Aorta (tissue), 5 donors: ENCODE measurements at regions of chr18 and their contacts with region 1.

Region 1: DNA sequence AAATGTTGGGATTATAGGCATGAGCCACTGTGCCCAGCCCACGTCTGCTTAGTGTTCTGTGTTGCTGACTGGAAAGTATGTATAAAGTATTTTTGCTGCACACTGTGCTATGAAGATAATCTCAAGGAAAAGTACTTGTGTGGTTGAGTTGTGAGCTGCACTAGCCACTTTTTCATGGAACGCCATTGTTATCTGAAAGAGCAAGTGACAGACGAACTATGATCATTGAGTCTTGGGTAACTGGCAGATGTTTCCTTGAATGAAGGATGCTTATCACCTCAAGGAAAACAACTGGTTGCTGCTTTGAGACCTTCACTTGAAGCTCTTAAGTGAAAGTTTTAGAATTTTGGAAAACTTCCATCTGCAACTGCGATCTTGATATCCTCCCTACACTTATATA is 82.2 kb upstream of the KCTD1 start:
- DNase-seq: no peak
- ATAC-seq: no peak
- H3K4me3 ChIP-seq: no peak overlapping the region
- H3K27ac ChIP-seq: no peak overlapping the region
- H3K4me1 ChIP-seq: no peaks in the 10 kb centered on the region
- H3K27me3 ChIP-seq: no peaks in the 10 kb centered on the region

Region 2: GRCh38 chr18:26593365-26594320 is 37.0 kb before region 1 on chr18:
- intact Hi-C with region 1: loop called in 1 of 2 experiments (anchors 2 kb)
- DNase-seq: no peak
- ATAC-seq: no peak
- H3K4me3 ChIP-seq: no peak overlapping the region
- H3K27ac ChIP-seq: no peak overlapping the region
- H3K4me1 ChIP-seq: no peaks in the 10 kb centered on the region
- H3K27me3 ChIP-seq: no peaks in the 10 kb centered on the region

Region 3: DNA sequence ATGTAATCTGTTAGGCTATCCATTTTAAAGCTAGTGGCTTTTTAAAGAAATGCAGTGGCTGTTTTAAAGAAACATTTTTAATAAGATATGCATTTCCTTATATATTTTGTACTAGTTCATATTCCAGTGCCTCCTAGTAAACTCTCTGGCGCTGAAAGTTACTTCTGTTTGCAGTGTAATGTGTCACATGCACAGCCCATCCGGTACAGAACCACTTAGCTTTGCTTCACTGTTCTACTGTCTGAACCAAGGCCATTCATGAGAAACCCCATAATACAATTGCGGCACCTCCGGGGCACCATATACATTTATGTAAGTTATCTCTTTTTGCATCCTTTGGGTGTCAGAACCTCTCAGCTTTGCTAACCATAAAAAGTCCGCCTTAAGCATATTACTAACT is 32.4 kb after region 1 on chr18:
- intact Hi-C with region 1: loop called in 1 of 2 experiments (anchors 5 kb)
- DNase-seq: no peak
- ATAC-seq: no peak
- H3K4me3 ChIP-seq: no peak overlapping the region
- H3K27ac ChIP-seq: no peak overlapping the region
- H3K4me1 ChIP-seq: no peaks in the 10 kb centered on the region
- H3K27me3 ChIP-seq: no peaks in the 10 kb centered on the region